ENCODE measurements at regions of chr2 and their contacts with region 1.

Region 1: DNA sequence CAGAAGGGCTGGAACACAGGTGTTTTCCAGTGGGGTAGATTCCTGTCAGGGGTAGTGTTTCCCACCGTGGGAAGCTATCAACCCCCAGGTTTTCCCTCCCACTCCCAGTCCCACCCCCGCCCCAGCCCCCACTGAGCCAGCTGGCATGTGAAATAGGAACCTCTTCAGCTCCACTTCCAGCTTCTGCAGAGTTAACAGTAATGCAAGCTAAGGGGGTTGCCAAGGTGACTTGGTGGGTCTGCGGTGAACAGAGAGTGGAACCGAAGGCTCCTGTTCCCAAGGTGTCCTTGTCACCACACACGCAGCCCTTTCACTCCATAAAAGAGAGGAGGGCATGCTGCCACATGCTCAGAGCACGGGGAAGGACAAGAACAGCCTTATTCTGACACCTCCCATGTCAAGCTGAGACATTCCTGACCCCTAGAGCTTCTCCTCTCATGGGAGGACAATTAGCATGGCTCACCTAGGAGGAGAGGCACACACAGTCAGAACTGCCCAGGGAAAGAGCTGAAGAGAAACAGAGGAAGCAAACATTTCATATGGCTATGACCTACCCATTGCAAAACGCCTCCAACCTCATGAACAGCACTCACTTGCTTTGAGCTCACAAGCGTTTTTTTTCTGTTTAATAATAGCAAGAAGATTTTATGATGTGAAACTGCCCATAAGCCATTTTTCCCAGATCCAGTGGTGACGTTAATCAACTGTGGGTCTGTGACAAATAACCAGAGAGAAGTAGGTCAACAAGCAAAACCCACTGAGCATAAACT is 39.8 kb upstream of the TBC1D8 start:
- DNase-seq: no peak
- ATAC-seq: no peak
- H3K4me3 ChIP-seq: no peak overlapping the region
- H3K4me3 Mint-ChIP-seq: no peak overlapping the region
- H3K27ac ChIP-seq: no peak overlapping the region
- H3K27ac Mint-ChIP-seq: no peak overlapping the region
- H3K4me1 ChIP-seq: no peaks in the 10 kb centered on the region
- H3K4me1 Mint-ChIP-seq: no peaks in the 10 kb centered on the region
- H3K27me3 ChIP-seq: peaks cover 0 to 2% of the 10 kb centered on the region in 2 experiments
- H3K27me3 Mint-ChIP-seq: no peaks in the 10 kb centered on the region
- CTCF ChIP-seq: no peak

Region 2: DNA sequence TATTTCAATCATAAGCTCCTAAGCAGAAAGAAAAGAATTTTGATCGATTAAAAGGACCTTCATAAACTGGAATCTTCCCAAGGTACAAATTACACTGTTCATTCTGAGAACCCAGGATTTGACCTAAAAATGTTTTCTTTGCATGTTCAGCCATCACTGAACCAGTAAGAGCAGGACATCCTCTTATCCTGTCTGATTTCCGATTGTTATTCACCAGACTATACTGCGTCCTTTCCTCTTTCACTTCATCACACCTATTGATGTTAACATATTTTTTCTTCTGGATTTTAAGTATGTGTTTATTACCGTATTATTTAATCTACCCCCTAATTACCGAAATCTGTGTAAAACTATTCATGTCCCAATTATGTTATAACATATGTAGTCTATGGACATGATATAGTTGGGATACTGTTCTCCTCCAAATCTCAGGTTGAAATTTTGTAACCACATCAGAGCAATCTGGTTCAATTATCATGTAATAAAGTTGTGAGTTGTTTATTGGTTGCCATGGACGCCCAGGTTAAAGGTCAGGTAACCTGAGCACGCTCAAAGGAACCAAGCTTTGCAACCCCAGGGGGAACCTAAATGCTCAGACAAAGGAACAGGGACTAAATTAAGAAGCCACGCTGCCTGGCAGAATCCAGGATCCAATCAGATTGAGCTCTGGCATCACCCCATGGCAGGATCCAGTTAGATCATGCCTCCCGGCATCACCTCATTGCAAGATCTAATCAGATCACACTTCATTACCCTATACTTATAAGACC is 28.2 kb before region 1 on chr2:
- CTCF ChIA-PET with region 1: no interaction called
- POLR2A ChIA-PET with region 1: no interaction called
- intact Hi-C with region 1: loop called in 1 of 2 experiments (anchors 1 kb)
- DNase-seq: no peak
- ATAC-seq: no peak
- H3K4me3 ChIP-seq: no peak overlapping the region
- H3K4me3 Mint-ChIP-seq: no peak overlapping the region
- H3K27ac ChIP-seq: no peak overlapping the region
- H3K27ac Mint-ChIP-seq: no peak overlapping the region
- H3K4me1 ChIP-seq: no peaks in the 10 kb centered on the region
- H3K4me1 Mint-ChIP-seq: no peaks in the 10 kb centered on the region
- H3K27me3 ChIP-seq: no peaks in the 10 kb centered on the region
- H3K27me3 Mint-ChIP-seq: no peaks in the 10 kb centered on the region
- CTCF ChIP-seq: no peak

Region 3: DNA sequence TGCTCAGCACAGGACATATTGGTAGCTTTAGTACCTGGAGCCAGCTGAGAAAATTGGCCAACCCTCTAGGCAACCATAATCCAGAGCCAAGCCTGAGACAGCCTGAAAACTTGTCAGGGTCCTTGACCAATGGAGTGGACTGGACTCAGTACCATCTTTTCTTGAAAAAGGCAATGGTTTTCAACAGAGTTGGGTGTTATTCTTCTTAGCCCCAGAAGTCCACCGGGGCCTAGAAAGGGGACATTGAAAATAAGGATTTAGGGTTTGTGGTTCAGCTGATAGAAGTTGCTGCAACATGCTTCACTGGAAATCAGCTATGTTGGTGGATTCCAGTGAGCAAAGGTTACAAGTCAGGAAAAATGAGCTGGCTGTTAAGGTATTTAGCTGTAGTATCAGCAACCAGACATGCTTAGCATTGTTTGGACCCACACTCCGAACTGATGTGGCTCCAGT is 39.6 kb after region 1 on chr2:
- CTCF ChIA-PET with region 1: no interaction called
- POLR2A ChIA-PET with region 1: no interaction called
- intact Hi-C with region 1: no loop called
- DNase-seq: no peak
- ATAC-seq: no peak
- H3K4me3 ChIP-seq: no peak overlapping the region
- H3K4me3 Mint-ChIP-seq: no peak overlapping the region
- H3K27ac ChIP-seq: no peak overlapping the region
- H3K27ac Mint-ChIP-seq: no peak overlapping the region
- H3K4me1 ChIP-seq: no peaks in the 10 kb centered on the region
- H3K4me1 Mint-ChIP-seq: no peaks in the 10 kb centered on the region
- H3K27me3 ChIP-seq: no peaks in the 10 kb centered on the region
- H3K27me3 Mint-ChIP-seq: no peaks in the 10 kb centered on the region
- CTCF ChIP-seq: no peak

Measured in CD8-positive, alpha-beta T cell (primary cell).